Activated CD4-positive, alpha-beta T cell treated with anti-CD3 and anti-CD28 coated beads for 36 hours (primary cell): ENCODE measurements at regions of chr12 and their contacts with region 1.

Region 1: GRCh38 chr12:110583137-110584059 is at the start of gene PPTC7:
- DNase-seq: peak; percentile 99
- ATAC-seq: peak; percentile 86
- H3K4me3 Mint-ChIP-seq: peak within 1 kb of the TSS; percentile 91
- H3K27ac Mint-ChIP-seq: peak within 1 kb of the TSS; percentile 99
- H3K4me1 Mint-ChIP-seq: peaks cover 59% of the 10 kb centered on the region
- H3K27me3 Mint-ChIP-seq: no peaks in the 10 kb centered on the region
- total RNA-seq, gene PPTC7: 33.4 to 36.5 TPM

Region 2: DNA sequence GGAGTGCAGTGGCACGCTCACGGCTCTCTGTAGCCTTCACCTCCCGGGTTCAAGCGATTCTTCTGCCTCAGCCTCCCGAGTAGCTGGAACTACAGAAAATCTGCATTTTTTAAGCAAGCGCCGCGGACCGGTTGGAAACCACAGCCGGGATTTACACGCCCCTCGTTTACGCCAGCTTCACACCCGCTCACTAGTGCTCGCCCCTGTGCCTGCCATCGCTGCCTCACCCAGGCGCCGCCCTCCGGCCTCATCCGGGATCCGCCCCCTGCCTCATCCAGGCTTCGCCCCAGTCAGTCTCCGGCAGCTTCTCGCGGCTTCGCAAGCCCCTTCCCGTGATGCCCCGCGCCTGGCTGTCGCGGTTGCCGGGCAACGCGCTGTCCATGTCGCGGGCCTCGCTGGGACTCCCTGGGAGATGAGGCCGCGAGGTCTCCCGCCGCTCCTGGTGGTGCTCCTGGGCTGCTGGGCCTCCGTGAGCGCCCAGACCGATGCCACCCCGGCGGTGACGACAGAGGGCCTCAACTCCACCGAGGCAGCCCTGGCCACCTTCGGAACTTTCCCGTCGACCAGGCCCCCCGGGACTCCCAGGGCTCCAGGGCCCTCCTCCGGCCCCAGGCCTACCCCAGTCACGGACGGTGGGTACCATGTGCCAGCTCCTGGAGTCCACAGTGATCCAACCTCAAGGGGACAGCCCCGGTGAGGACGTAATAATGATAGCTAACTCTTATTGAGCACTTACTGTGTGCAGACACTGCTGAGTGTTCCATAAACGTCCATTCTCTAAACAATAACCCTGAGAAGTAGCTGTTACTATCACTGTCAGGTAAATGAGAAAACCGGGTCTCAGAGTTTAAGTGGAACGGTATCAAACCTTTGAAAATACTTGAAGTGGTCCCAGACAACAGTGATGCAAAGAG is 30.6 kb after region 1 on chr12 and contains the start of gene TCTN1:
- CTCF ChIA-PET with region 1: interaction called, 4 read pairs
- POLR2A ChIA-PET with region 1: interaction called, 9 read pairs
- intact Hi-C with region 1: loop called in 1 of 2 experiments (anchors 1 kb)
- DNase-seq: peak; percentile 99
- ATAC-seq: peak; percentile 99
- H3K4me3 Mint-ChIP-seq: peak within 1 kb of the TSS; percentile 78
- H3K27ac Mint-ChIP-seq: peak within 1 kb of the TSS; percentile 67
- H3K4me1 Mint-ChIP-seq: peaks cover 12% of the 10 kb centered on the region
- H3K27me3 Mint-ChIP-seq: no peaks in the 10 kb centered on the region
- total RNA-seq, gene TCTN1: 7.2 to 7.3 TPM

Region 3: GRCh38 chr12:110813285-110813684 is 229.9 kb after region 1 on chr12:
- CTCF ChIA-PET with region 1: no interaction called
- POLR2A ChIA-PET with region 1: no interaction called
- intact Hi-C with region 1: no loop called
- DNase-seq: no peak
- ATAC-seq: no peak
- H3K4me3 Mint-ChIP-seq: no peak overlapping the region
- H3K27ac Mint-ChIP-seq: no peak overlapping the region
- H3K4me1 Mint-ChIP-seq: peaks cover 2% of the 10 kb centered on the region
- H3K27me3 Mint-ChIP-seq: peaks cover 3% of the 10 kb centered on the region

Region 4: GRCh38 chr12:110998165-110998564 is 414.8 kb after region 1 on chr12:
- CTCF ChIA-PET with region 1: no interaction called
- POLR2A ChIA-PET with region 1: no interaction called
- intact Hi-C with region 1: no loop called
- DNase-seq: no peak
- ATAC-seq: no peak
- H3K4me3 Mint-ChIP-seq: no peak overlapping the region
- H3K27ac Mint-ChIP-seq: no peak overlapping the region
- H3K4me1 Mint-ChIP-seq: no peaks in the 10 kb centered on the region
- H3K27me3 Mint-ChIP-seq: peaks cover 3% of the 10 kb centered on the region